Activated T-helper 2 cell treated with anti-CD3 and anti-CD28 coated beads, Interferon-gamma antibody, Interleukin-2, Interleukin-4, amounts not matched to agents 10 μg/mL and 5 μg/mL and 100 μg/mL, durations not matched to agents 14 hours and 24 hours and 36 hours (primary cell): ENCODE measurements at regions of chr11 and their contacts with region 1.

Region 1: DNA sequence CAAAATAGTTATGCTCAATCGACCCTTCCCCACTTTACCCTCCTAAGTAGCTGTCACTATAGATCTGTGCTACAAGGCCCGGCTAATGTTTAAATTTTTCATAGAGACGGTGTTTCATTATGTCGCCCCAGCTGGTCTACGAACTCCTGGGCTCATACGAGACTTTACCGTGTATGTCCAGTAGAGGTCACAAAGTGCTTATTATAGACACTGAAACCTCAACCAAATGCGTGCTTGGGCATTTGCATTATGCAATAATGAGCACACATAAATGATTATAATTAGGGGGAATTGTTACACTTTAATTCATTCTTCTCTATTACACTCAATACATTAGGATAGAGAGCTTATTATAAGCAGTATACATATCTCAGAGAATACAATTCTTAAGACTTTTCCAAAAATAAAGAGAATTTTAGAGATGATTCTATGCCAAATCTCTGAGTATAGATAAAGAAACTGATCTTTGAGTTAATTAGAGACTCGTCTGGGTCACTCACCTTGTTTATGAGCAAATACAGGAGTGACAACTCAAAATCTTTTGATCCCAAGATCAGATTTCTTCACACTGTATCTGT is 12.5 kb upstream of the MRPL16 start:
- DNase-seq: no peak
- H3K4me3 Mint-ChIP-seq: no peak overlapping the region
- H3K27ac Mint-ChIP-seq: no peak overlapping the region
- H3K4me1 Mint-ChIP-seq: peaks cover 15% of the 10 kb centered on the region
- H3K27me3 Mint-ChIP-seq: no peaks in the 10 kb centered on the region

Region 2: DNA sequence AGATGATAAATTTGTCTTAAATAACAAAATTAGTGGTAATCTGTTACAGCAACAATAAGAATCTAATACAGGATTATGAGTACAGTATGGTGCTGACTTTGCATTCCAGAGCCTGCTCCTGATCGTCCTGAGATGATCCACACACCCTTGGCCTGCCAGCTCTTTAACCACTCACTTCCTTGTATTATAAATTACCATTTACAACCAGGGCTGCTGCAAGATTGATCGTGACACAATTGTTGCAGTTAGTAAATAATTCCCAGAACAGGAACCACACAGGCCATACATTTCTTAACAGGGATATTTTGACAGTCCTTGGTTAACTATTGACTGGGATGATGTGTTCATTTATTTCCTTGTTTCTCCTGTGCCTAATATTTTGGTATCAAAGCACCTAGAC is 26.1 kb after region 1 on chr11:
- intact Hi-C with region 1: no loop called
- DNase-seq: no peak
- H3K4me3 Mint-ChIP-seq: no peak overlapping the region
- H3K27ac Mint-ChIP-seq: no peak overlapping the region
- H3K4me1 Mint-ChIP-seq: peaks cover 5% of the 10 kb centered on the region
- H3K27me3 Mint-ChIP-seq: no peaks in the 10 kb centered on the region

Region 3: GRCh38 chr11:59918987-59919589 is 96.0 kb after region 1 on chr11:
- intact Hi-C with region 1: loop called (anchors 1 kb)
- DNase-seq: no peak
- H3K4me3 Mint-ChIP-seq: no peak overlapping the region
- H3K27ac Mint-ChIP-seq: no peak overlapping the region
- H3K4me1 Mint-ChIP-seq: peaks cover 2% of the 10 kb centered on the region
- H3K27me3 Mint-ChIP-seq: peaks cover 5% of the 10 kb centered on the region

Region 4: GRCh38 chr11:60130496-60130895 is 307.4 kb after region 1 on chr11:
- intact Hi-C with region 1: loop called (anchors 5 kb)
- DNase-seq: no peak
- H3K4me3 Mint-ChIP-seq: no peak overlapping the region
- H3K27ac Mint-ChIP-seq: no peak overlapping the region
- H3K4me1 Mint-ChIP-seq: no peaks in the 10 kb centered on the region
- H3K27me3 Mint-ChIP-seq: no peaks in the 10 kb centered on the region

Region 5: DNA sequence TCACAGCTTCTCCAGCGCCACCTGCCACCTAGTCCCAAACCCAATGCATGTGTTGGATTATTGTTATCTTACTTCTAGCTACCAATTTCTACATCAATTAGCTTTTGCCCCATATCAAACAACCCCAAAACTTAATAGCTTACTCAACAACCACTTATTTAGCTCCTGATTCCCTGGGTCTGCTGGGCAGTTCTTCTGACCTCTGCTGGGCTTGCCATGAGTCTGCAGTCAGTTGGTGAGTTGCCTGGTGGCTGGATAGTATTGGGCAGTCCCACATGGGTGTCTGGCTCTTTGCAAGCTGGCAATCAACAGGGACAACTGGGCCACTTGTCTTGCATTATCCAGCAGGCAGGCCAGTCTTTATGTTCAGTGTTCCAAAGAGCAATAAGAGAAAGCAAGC is 920.0 kb after region 1 on chr11:
- intact Hi-C with region 1: no loop called
- DNase-seq: no peak
- H3K4me3 Mint-ChIP-seq: no peak overlapping the region
- H3K27ac Mint-ChIP-seq: no peak overlapping the region
- H3K4me1 Mint-ChIP-seq: no peaks in the 10 kb centered on the region
- H3K27me3 Mint-ChIP-seq: peaks cover 7% of the 10 kb centered on the region